ENCODE measurements at regions of chr12 and their contacts with region 1.

Region 1: DNA sequence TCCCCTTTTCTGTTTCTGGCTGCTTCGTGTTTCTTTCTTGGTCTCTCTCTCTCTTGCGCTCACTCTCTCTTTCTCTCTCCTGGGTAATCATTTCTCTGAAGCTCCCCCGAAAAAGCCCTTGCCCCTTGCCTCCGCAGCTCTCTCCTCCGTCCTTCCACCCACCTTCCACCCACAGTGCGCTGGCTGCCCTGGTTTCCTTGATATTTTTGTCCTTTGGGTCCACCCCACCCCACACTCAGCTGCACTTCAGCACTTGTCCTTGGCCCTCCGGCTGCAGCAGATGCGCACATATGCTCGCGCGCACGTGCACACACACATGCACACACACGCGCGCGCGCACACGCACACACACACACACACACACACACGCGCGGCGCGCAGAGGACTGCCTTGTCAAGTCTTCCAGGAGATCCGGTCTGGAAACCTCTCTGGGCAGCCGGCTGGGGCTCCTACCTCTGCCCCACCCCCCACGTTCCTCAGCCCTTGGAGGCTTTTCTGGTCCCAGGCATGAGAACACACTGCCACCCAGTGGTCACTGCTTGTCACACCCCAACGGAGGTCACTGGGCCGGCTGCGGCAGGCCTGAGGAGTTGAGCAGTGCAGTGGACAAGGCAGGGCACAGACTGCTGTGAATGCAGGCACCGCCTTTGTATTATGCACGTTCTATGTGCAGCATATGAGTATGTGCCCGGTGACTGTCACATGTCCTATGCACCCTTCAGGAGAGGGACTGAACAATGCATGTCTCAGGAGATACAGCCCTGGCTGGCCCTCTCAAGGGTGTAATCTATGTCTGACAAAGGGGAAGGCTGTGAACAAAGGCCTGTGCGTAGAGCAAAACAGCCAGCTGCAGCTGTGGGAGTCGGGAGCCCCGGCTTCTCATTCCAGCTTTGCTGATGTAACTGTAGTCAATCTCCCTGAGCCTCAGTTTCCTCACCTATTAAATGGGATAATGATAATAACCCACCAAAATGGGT is 6.5 kb downstream of the LAG3 start:
- DNase-seq: peak; percentile 80 to 93 (median 83)
- ATAC-seq: peak; percentile 84
- H3K4me3 ChIP-seq: peak overlapping the region; percentile 59
- H3K4me3 Mint-ChIP-seq: peak overlapping the region; percentile 85
- H3K27ac ChIP-seq: peak overlapping the region in 1 of 2 donors; percentile 24
- H3K27ac Mint-ChIP-seq: peak overlapping the region; percentile 77
- H3K4me1 ChIP-seq: peaks cover 70% of the 10 kb centered on the region
- H3K4me1 Mint-ChIP-seq: peaks cover 59% of the 10 kb centered on the region
- H3K27me3 ChIP-seq: peaks cover 0 to 8% of the 10 kb centered on the region in 2 experiments
- H3K27me3 Mint-ChIP-seq: peaks cover 19% of the 10 kb centered on the region
- CTCF ChIP-seq: peak; percentile 94

Region 2: DNA sequence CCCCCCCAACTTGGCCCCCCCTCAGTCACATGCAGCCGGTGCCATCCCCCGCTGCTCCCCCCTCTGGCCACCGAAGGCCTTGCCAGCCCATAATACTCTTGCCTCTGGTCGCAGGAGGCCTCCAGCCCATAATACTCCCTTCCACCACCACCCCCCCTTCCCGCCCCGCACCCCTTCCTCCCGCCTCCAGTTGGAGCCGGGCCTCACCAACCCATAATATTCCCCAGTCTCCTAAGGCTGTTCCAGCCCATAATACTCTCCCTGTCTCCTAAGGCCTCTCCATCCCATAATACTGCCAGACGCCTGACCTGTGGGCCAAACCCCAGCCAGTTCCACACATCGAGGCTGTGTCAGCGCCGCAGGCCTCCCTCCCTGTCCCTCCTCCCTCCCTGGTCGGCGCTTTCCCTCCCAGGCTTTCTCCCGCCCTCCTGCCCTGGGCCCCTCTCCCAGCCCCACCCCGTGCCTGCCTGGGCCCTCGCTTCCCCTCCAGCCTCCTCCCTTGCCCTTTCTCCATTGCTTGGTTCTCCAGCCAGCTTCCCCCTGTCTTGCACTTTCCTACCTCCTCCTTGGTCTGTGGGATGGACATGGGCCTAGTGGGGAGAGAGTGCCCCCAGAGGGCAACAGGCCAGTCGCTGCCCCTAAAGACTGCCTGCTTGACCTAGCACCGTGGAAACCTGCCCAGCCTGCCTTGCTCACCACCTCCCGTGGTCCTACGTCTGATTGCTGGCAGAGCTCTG is 164.9 kb before region 1 on chr12:
- CTCF ChIA-PET with region 1: no interaction called
- POLR2A ChIA-PET with region 1: no interaction called
- intact Hi-C with region 1: loop called (anchors 1 to 2 kb)
- DNase-seq: peak in 9 of 14 experiments; percentile 16 to 84 (median 46)
- ATAC-seq: peak; percentile 36
- H3K4me3 ChIP-seq: no peak overlapping the region
- H3K4me3 Mint-ChIP-seq: peak overlapping the region; percentile 31
- H3K27ac ChIP-seq: peak overlapping the region; percentile 40 to 47
- H3K27ac Mint-ChIP-seq: peak overlapping the region; percentile 84
- H3K4me1 ChIP-seq: peaks cover 43% of the 10 kb centered on the region
- H3K4me1 Mint-ChIP-seq: peaks cover 47% of the 10 kb centered on the region
- H3K27me3 ChIP-seq: no peaks in the 10 kb centered on the region
- H3K27me3 Mint-ChIP-seq: no peaks in the 10 kb centered on the region
- CTCF ChIP-seq: no peak

Region 3: DNA sequence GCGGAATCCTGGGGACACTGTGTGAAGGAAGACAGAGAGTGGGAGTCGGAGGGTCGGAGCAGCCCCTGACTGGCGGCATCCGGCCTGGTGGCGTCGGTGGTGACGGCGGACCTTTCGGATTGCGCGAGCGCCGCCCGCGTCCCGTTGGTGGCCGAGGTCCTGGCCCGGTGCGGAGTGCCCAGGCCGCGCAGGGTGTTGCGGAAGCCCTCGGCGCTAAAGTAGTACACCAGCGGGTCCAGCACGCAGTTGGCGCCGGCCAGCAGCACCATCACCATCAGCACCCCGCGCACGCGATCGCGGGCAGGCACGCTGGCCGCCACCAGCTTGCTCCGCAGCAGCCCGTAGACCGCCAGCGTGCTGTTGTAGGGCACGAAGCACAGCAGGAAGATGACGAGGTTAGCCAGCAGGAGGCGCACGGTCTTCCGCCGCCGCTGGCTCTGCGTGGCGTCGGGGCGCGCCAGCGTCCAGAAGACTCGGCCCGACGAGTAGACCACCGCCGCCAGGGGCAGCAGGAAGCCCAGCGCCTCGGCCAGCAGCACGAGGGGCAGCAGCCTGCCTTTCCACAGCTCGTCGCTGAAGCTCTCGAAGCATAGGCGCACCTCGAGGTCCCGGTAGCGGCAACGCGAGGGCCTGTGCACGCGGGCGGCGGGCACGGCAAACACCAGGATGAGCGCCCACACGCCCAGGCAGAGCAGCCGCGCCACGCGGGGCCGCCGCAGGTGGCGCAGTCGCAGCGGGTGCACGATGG is 158.6 kb before region 1 on chr12:
- CTCF ChIA-PET with region 1: no interaction called
- POLR2A ChIA-PET with region 1: no interaction called
- intact Hi-C with region 1: loop called (anchors 1 to 2 kb)
- DNase-seq: peak in 12 of 14 experiments; percentile 26 to 85 (median 50)
- ATAC-seq: peak; percentile 75
- H3K4me3 ChIP-seq: peak overlapping the region; percentile 17
- H3K4me3 Mint-ChIP-seq: peak overlapping the region; percentile 70
- H3K27ac ChIP-seq: peak overlapping the region in 1 of 2 donors; percentile 21
- H3K27ac Mint-ChIP-seq: peak overlapping the region; percentile 65
- H3K4me1 ChIP-seq: peaks cover 13% of the 10 kb centered on the region
- H3K4me1 Mint-ChIP-seq: peaks cover 15% of the 10 kb centered on the region
- H3K27me3 ChIP-seq: no peaks in the 10 kb centered on the region
- H3K27me3 Mint-ChIP-seq: no peaks in the 10 kb centered on the region
- CTCF ChIP-seq: peak; percentile 75

Region 4: DNA sequence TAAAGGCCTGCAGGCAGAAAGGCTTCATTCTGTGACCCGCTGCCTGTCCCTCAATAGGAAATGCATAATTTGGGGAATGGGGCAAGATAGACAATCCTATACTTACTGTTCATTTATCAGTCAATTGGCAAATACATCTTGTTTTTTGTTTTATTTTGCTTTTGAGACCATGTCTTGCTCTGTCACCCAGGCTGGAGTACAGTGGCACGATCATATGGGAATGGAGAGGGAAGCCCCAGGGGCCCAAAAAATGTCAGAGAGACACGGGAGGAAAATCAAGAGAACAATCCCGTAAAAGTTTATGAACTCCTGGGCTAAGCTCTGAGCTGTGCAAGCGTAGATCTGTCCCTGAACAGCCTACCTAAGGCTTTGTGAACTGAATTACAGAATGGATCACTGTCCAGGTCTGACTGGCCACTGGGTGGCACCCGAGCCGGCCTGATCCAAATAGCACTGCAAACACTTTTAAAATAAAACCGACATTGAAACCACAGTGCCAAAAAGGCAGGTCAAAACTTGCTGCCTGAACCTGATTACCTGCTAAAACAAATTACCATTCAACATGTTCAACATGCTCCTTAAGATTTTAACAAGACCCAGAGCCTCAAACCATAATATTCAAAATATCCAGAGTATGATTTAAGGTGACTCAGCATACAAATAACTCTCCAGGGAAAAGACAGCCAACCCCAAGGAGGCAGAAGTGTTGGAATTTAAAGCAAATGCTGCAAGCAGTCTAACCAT is 43.2 kb before region 1 on chr12:
- CTCF ChIA-PET with region 1: interaction called, 4 read pairs
- POLR2A ChIA-PET with region 1: no interaction called
- intact Hi-C with region 1: loop called in 1 of 2 experiments (anchors 1 kb)
- DNase-seq: peak in 13 of 14 experiments; percentile 9 to 64 (median 37)
- ATAC-seq: peak; percentile 67
- H3K4me3 ChIP-seq: no peak overlapping the region
- H3K4me3 Mint-ChIP-seq: no peak overlapping the region
- H3K27ac ChIP-seq: no peak overlapping the region
- H3K27ac Mint-ChIP-seq: no peak overlapping the region
- H3K4me1 ChIP-seq: no peaks in the 10 kb centered on the region
- H3K4me1 Mint-ChIP-seq: peaks cover 4% of the 10 kb centered on the region
- H3K27me3 ChIP-seq: no peaks in the 10 kb centered on the region
- H3K27me3 Mint-ChIP-seq: no peaks in the 10 kb centered on the region
- CTCF ChIP-seq: peak; percentile 58

Measured in CD4-positive, alpha-beta T cell (primary cell).